ENCODE measurements at regions of chr12 and their contacts with region 1.

Region 1: GRCh38 chr12:104641862-104642261 is 185.1 kb downstream of the CHST11 start:
- DNase-seq: peak; percentile 44
- ATAC-seq: peak; percentile 86
- H3K4me3 Mint-ChIP-seq: peak overlapping the region; percentile 55
- H3K27ac Mint-ChIP-seq: peak overlapping the region; percentile 95
- H3K4me1 Mint-ChIP-seq: peaks cover 83% of the 10 kb centered on the region
- H3K27me3 Mint-ChIP-seq: no peaks in the 10 kb centered on the region
- CTCF ChIP-seq: no peak

Region 2: GRCh38 chr12:104276273-104277131 is 365.4 kb before region 1 on chr12:
- CTCF ChIA-PET with region 1: no interaction called
- POLR2A ChIA-PET with region 1: no interaction called
- intact Hi-C with region 1: no loop called
- DNase-seq: no peak
- ATAC-seq: peak; percentile 79
- H3K4me3 Mint-ChIP-seq: peak overlapping the region; percentile 85
- H3K27ac Mint-ChIP-seq: peak overlapping the region; percentile 70
- H3K4me1 Mint-ChIP-seq: peaks cover 13% of the 10 kb centered on the region
- H3K27me3 Mint-ChIP-seq: peaks cover 3% of the 10 kb centered on the region
- CTCF ChIP-seq: no peak

Region 3: DNA sequence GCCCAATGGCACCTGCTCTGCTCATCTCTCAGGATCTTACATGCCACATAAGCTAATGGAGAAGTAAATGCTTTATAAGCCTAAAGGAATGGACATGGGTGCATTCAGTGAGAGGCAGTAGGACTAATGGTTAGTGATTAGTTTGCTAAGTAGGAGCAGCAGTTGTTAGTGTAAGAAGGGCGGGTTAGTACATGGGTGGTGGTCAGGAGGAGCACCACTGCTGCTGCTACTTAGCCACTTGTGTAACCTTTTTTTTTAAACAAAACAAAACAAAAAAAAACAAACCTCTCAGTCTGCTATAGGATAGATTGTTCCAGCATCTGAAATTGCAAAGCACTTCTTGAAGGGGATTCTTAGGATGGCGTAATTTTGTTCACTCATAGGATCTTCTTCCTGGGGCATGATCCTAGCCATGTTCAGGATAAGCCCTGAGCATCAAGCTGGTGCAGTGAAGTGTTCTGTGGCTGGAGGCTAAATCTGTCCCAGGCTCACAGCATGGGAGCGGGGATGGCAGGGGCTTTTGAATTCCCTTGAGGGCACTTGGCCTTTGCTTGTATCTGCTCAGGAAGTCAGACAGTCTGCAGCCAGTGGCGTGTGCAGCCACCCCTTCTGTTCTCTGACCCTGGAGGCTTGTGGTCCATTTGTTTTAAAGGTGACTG is 121.5 kb before region 1 on chr12:
- CTCF ChIA-PET with region 1: interaction called, 3 read pairs
- POLR2A ChIA-PET with region 1: interaction called, 3 read pairs
- intact Hi-C with region 1: loop called (anchors 1 kb)
- DNase-seq: peak; percentile 53
- ATAC-seq: peak; percentile 83
- H3K4me3 Mint-ChIP-seq: peak overlapping the region; percentile 75
- H3K27ac Mint-ChIP-seq: peak overlapping the region; percentile 79
- H3K4me1 Mint-ChIP-seq: peaks cover 97% of the 10 kb centered on the region
- H3K27me3 Mint-ChIP-seq: no peaks in the 10 kb centered on the region
- CTCF ChIP-seq: no peak

Region 4: GRCh38 chr12:104582739-104583138 is 59.1 kb before region 1 on chr12:
- CTCF ChIA-PET with region 1: interaction called, 5 read pairs
- POLR2A ChIA-PET with region 1: interaction called, 6 read pairs
- intact Hi-C with region 1: loop called (anchors 1 kb)
- DNase-seq: peak; percentile 26
- ATAC-seq: peak; percentile 86
- H3K4me3 Mint-ChIP-seq: peak overlapping the region; percentile 56
- H3K27ac Mint-ChIP-seq: peak overlapping the region; percentile 70
- H3K4me1 Mint-ChIP-seq: peaks cover 89% of the 10 kb centered on the region
- H3K27me3 Mint-ChIP-seq: no peaks in the 10 kb centered on the region
- CTCF ChIP-seq: no peak

Region 5: DNA sequence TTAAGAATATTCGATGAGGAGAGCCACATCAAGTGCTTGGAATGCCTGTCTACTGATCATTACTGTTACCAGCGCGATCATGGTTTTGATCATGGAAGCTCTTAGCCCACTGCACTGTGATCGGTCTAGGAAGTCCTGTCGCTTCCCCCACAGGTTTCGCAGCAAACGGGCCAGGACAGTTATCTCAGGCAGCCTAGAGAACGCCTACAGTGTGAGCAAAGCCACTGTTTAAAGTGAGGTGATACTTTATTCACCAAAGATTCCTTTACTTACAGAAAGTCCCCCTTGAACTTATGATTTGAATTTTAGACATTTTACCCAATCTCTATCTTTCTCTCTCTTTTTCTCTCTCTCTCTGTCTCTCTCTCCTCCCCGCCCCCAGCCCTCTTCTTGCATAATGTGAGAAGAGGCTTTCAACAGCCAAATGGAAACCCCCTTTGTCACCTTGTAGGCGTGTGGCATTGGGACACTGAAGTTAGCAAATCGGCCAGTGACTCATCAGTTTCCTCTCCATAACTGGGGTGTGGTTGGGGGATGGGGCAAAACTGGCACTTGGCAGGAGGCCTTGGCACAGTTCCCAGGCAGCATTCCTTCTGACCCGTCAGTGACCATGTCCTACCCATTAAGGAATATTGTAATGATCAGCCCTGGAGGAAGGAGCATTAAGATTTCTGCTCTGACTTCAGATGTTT is 29.7 kb after region 1 on chr12:
- CTCF ChIA-PET with region 1: interaction called, 3 read pairs
- POLR2A ChIA-PET with region 1: interaction called, 10 read pairs
- intact Hi-C with region 1: loop called (anchors 1 kb)
- DNase-seq: peak; percentile 53
- ATAC-seq: peak; percentile 82
- H3K4me3 Mint-ChIP-seq: peak overlapping the region; percentile 71
- H3K27ac Mint-ChIP-seq: peak overlapping the region; percentile 92
- H3K4me1 Mint-ChIP-seq: peaks cover 80% of the 10 kb centered on the region
- H3K27me3 Mint-ChIP-seq: no peaks in the 10 kb centered on the region
- CTCF ChIP-seq: no peak

Region 6: DNA sequence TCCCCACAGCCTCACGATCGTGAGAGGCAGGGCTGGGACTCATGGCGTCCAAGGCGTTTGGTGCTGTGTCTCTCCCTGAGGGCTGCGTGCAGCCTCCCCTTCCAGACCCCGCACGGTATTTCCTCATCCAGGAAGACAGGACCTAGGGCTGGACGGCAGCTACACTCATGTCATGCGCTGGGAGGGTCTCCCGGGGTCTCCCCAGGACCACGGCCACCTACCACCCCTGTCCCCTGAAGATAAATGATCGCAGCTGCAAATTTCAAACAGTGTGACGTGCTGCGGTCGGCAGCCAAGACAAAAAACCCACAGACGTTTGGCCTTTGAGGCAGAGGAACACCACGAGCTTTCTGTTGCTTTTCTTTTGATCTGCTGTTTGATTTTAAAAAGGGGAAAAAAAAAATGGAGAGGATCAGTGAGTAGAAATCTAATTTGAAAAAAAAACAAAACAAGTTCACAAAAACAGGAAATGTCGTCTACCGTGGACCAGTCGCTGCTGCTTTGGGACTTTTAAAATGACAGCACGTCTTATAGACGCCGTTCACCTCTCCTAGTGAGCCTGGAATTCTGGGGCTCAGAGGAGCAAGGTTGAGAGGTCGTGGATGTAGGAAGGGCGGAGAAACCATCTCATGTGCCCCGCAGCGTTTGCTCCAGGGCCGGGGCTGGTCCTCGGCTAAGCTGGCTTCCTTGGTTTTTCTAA is 78.6 kb after region 1 on chr12:
- CTCF ChIA-PET with region 1: no interaction called
- POLR2A ChIA-PET with region 1: interaction called, 4 read pairs
- intact Hi-C with region 1: loop called (anchors 1 kb)
- DNase-seq: peak; percentile 27
- ATAC-seq: peak; percentile 57
- H3K4me3 Mint-ChIP-seq: peak overlapping the region; percentile 75
- H3K27ac Mint-ChIP-seq: peak overlapping the region; percentile 77
- H3K4me1 Mint-ChIP-seq: peaks cover 62% of the 10 kb centered on the region
- H3K27me3 Mint-ChIP-seq: no peaks in the 10 kb centered on the region
- CTCF ChIP-seq: no peak

Region 7: GRCh38 chr12:104750061-104750460 is 108.2 kb after region 1 on chr12:
- CTCF ChIA-PET with region 1: no interaction called
- POLR2A ChIA-PET with region 1: no interaction called
- intact Hi-C with region 1: loop called (anchors 1 kb)
- DNase-seq: no peak
- ATAC-seq: peak; percentile 51
- H3K4me3 Mint-ChIP-seq: no peak overlapping the region
- H3K27ac Mint-ChIP-seq: peak overlapping the region; percentile 50
- H3K4me1 Mint-ChIP-seq: peaks cover 66% of the 10 kb centered on the region
- H3K27me3 Mint-ChIP-seq: no peaks in the 10 kb centered on the region
- CTCF ChIP-seq: no peak

Region 8: DNA sequence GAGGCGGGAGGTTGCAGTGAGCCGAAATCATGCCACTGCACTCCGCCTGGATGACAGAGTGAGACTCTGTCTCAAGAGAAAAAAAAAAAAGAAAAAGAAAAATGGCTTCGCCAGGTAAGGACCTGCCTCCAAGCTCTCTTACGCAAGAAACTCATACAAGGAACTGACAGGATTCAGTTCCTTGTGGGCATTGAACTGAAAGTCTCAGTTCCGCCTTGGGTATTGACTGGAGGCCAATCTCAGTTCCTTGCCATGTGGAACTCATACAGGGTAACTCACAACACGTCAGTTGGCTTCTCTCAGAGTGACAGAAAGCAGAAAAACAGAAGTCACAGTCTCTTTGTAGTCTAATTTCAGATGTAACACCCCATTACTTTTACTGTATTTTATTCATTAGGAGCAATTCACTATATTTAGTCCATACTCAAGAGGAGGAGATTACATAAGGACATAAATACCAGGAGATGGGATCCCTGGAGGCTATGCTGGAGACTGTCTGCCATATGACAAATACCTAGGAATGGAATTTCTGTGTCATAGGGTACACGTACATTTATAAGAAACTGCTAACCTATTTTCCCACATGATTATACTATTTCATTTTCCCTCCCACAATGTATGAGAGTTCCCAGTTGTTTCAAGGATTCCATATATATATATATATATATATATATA is 332.9 kb after region 1 on chr12:
- CTCF ChIA-PET with region 1: no interaction called
- POLR2A ChIA-PET with region 1: no interaction called
- intact Hi-C with region 1: loop called (anchors 1 kb)
- DNase-seq: peak; percentile 35
- ATAC-seq: peak; percentile 98
- H3K4me3 Mint-ChIP-seq: peak overlapping the region; percentile 17
- H3K27ac Mint-ChIP-seq: peak overlapping the region; percentile 72
- H3K4me1 Mint-ChIP-seq: peaks cover 40% of the 10 kb centered on the region
- H3K27me3 Mint-ChIP-seq: no peaks in the 10 kb centered on the region
- CTCF ChIP-seq: no peak

Measured in activated B cell treated with CpG ODN at 0.5 μM for 24 hours (primary cell).